Right cardiac atrium (tissue), 5 donors: ENCODE measurements at regions of chr12 and their contacts with region 1.

Region 1: DNA sequence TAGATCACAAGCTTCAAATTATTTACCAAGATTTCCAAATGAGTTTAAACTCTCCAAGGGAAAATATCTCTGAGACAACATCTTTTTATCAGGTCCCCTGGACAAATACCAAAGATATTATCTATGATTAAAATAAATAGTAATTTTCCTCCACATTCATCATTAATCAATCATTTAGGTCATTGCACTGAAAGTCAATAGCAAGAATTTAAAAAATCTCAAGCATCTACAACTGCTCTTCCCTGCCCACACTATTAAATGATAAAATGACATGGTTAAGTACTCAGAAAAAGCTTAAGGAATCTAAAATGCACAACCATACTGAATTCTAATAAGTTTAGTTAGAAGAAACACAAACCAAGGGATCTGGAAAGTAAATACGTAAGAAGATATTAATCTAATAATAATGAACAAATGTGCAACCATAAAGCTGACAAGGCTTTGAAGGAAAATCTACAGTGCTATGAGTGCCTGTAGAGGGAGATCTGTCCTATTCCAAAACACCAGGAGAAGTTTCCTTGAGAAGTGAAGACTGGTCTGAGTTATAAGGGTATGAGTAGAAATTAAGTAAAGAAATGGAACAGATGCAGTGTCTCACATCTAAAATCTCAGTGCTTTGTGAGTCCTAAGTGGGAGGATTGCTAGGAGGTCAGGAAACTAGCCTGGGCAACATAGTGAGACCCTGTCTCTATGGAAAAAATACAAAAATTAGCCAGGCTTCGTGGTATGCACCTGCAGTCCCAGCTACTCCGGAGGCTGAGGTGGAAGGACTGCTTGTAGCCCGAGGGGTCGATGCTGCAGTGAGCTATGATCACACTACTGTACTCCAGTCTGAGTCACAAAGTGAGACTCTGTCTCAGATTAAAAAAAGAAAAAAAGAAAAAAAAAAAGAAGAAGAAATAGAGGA is 19.2 kb downstream of the INTS13 start:
- DNase-seq: no peak
- ATAC-seq: no peak
- H3K4me3 ChIP-seq: no peak overlapping the region
- H3K27ac ChIP-seq: no peak overlapping the region
- H3K4me1 ChIP-seq: no peaks in the 10 kb centered on the region
- H3K27me3 ChIP-seq: no peaks in the 10 kb centered on the region

Region 2: GRCh38 chr12:27324530-27324929 is 406.0 kb after region 1 on chr12:
- intact Hi-C with region 1: loop called in 1 of 4 experiments (anchors 10 kb)
- DNase-seq: no peak
- ATAC-seq: no peak
- H3K4me3 ChIP-seq: no peak overlapping the region
- H3K27ac ChIP-seq: no peak overlapping the region
- H3K4me1 ChIP-seq: no peaks in the 10 kb centered on the region
- H3K27me3 ChIP-seq: no peaks in the 10 kb centered on the region